Activated T-helper 2 cell treated with anti-CD3 and anti-CD28 coated beads, Interferon-gamma antibody, Interleukin-2, Interleukin-4, amounts not matched to agents 10 μg/mL and 5 μg/mL and 100 μg/mL, durations not matched to agents 14 hours and 24 hours and 36 hours (primary cell): ENCODE measurements at regions of chr11 and their contacts with region 1.

Region 1: DNA sequence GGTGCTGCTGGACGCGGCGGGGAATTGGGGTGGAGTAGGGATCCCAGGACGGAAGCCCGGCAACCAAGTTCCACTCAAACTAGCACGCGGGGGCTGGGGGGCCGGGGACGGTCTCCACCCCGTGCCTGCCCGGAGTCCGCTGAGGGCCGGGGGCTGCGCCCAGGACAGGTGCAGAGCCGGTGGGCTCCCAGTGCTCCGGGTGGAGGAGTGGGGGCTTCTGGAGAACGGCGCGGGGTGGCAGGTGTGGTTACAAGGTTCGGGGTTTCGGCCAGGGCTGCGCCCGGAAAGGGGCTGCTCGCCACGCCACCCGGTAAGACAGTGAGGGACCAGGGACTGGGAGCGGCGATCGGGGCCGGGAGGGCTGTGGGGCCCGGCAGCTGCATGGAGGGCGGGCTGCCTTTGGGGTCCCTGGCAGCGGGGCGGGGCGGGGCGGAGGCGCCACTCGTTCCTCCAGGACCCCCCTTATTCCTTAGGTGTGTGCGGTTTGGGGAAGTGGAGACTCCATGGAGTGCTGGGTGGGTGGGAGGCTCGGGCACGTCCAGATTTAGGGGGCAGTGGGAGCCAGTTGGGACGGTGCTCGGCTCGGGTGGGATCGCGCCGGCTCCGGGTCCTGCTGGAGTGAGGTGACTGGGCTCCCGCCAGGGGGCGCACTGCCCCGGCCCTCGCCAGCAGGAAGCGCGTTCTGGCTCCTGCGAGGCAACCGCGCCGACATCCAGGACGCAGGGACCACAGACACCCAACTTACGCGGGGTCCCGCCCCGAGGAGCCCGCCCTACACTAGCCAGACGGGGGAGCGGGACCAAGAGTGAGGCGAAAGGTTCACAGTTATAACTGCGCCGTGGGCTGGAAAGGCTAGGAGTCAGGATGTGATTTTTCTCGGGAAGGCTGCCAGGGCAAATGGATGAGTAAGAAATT is 868 bp downstream of the TSPAN18 start:
- DNase-seq: peak; percentile 63
- H3K4me3 Mint-ChIP-seq: peak overlapping the region; percentile 77
- H3K27ac Mint-ChIP-seq: no peak overlapping the region
- H3K4me1 Mint-ChIP-seq: peaks cover 30% of the 10 kb centered on the region
- H3K27me3 Mint-ChIP-seq: peaks cover 47% of the 10 kb centered on the region

Region 2: DNA sequence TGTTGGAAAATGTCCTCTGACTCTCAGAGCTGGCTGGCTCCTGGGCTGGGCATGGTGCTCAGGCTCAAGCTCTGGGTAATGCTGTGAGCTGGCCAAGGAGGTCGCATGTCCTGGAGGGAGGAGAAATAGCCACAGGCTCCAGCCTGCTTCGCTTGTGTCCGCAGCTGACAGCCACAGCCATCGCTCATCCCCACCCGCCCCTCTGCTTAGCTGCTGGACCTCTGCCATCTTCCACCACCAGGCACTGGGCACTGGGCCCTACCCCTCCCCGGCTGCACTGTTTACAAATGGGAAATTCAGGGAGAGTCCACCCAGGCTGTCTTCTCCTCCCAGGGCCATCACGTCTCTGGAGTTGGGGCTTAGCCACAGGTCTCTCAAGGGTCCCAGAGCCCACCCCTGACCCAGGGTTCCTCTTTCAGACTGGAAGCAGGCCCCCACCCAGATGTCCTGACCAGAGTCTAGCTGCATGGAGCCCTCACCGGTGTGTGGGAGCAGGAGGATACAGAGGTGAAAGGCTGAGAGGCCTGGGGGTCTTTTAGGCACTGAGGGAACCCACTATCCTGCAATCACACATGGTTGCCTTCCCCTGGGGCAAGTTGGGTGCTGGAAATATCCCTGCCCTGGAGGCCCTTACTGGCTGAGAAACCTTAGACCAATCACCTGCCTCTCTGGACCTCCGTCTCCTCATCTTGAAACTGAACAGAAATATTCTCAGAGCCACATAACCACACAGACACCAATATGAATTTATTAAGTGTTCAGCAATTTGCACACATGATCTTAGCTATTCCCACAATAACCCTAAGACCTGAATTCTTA is 99.5 kb before region 1 on chr11:
- intact Hi-C with region 1: loop called (anchors 5 kb)
- DNase-seq: peak; percentile 6
- H3K4me3 Mint-ChIP-seq: no peak overlapping the region
- H3K27ac Mint-ChIP-seq: no peak overlapping the region
- H3K4me1 Mint-ChIP-seq: peaks cover 12% of the 10 kb centered on the region
- H3K27me3 Mint-ChIP-seq: no peaks in the 10 kb centered on the region

Region 3: GRCh38 chr11:44893846-44894617 is 166.4 kb after region 1 on chr11:
- intact Hi-C with region 1: loop called (anchors 1 kb)
- DNase-seq: peak; percentile 14
- H3K4me3 Mint-ChIP-seq: no peak overlapping the region
- H3K27ac Mint-ChIP-seq: no peak overlapping the region
- H3K4me1 Mint-ChIP-seq: no peaks in the 10 kb centered on the region
- H3K27me3 Mint-ChIP-seq: peaks cover 2% of the 10 kb centered on the region

Region 4: DNA sequence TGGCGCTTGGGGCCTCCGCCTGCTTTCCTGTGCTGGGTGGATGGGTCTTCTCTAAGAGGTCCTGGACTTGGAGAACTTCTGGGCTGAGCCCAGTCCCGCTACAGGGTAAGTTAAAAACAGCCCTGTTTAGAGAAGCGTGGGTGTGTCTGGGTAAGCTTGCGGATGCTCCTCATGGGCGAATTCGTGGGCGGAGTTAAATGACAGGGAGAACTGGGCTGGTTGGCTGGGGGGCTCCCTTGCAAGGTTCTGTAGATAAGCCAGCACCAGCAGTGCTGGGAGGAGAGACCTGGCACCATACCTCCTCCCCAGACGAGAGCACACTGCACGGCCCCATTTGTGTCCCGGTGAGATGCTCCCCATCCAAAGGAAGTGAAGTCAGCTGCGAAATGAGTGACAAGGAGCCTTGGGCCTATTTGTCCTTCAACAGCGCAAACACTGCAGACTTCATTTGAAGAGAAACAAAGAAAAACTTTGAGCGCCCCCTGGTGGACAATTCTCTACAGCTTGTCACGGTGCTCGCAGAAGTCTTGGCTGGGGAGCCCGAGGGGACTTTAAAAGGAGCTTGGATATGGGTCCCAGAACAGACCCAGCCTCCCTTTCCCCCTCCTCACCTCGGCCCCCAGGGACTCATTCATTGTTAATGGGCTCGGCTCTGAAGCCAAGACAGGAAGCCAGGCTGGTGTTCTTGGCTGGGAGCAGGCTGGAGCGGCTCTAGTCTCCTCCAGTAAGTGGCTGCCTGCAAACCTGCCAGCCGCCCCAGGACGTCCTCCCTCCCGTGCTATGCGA is 183.6 kb after region 1 on chr11:
- intact Hi-C with region 1: loop called (anchors 1 kb)
- DNase-seq: peak; percentile 70
- H3K4me3 Mint-ChIP-seq: no peak overlapping the region
- H3K27ac Mint-ChIP-seq: no peak overlapping the region
- H3K4me1 Mint-ChIP-seq: peaks cover 3% of the 10 kb centered on the region
- H3K27me3 Mint-ChIP-seq: peaks cover 4% of the 10 kb centered on the region

Region 5: GRCh38 chr11:45180179-45180842 is 452.7 kb after region 1 on chr11:
- intact Hi-C with region 1: loop called (anchors 5 kb)
- DNase-seq: no peak
- H3K4me3 Mint-ChIP-seq: peak overlapping the region; percentile 49
- H3K27ac Mint-ChIP-seq: no peak overlapping the region
- H3K4me1 Mint-ChIP-seq: no peaks in the 10 kb centered on the region
- H3K27me3 Mint-ChIP-seq: peaks cover 39% of the 10 kb centered on the region